SK-N-SH (cell line): ENCODE measurements at regions of chr5 and their contacts with region 1.

Region 1: DNA sequence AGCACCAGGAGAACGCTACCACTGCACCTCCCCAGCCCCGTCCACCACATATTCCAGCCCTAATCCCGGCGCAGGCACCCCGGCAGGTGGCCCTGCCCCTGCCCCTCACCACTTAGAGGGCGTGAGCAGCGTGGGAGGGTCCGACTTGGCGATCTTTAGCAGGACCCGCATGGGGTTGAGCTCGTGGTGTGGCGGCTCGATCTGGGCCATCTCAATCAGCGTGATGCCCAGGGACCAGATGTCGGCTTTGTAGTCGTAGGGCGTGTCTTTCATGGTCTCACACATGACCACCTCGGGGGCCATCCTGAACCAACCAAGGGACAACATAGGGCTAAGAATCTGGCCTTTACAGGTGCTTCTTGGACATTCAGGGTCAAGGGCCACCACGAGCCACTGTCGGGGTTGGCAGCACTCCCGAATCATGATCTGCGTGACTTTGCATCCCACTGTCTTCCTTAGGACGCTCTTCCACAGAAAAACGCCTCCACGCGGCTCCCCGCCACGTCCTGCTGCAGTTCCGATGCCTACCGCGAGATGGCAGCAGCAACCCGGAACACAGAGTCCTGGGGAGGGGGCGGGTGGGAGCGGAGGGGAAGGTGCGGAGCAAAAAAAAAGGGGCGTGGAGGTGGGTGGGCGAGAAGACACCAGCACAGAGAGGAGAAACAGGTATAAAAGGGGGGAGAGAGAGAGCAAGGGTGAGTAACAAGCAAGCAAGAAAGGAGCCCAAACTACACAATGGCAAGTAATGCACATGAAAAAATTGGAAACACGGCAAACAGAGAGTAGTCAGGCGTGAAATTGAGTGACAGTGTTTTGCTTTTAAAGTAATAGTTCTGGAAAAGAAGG is 81.3 kb downstream of the STK10 start:
- DNase-seq: peak; percentile 86
- H3K4me3 ChIP-seq: peak overlapping the region in 1 of 2 experiments; percentile 14; a peak in 3 of 4 replicates
- H3K27ac ChIP-seq: no peak overlapping the region
- H3K4me1 ChIP-seq: peaks cover 14 to 32% of the 10 kb centered on the region in 2 experiments
- H3K27me3 ChIP-seq: no peaks in the 10 kb centered on the region
- CTCF ChIP-seq: peak; percentile 85
- EP300 ChIP-seq: no peak
- RAD21 ChIP-seq: peak; percentile 85

Region 2: GRCh38 chr5:172283020-172283861 is 176.5 kb after region 1 on chr5 and contains the start of gene UBTD2:
- CTCF ChIA-PET with region 1: interaction called, 13 read pairs
- POLR2A ChIA-PET with region 1: interaction called, 5 read pairs
- DNase-seq: peak; percentile 94
- H3K4me3 ChIP-seq: peak within 1 kb of the TSS; percentile 77 to 94
- H3K27ac ChIP-seq: peak within 1 kb of the TSS; percentile 67 to 86
- H3K4me1 ChIP-seq: peaks cover 5 to 8% of the 10 kb centered on the region in 2 experiments; a peak in 3 of 4 replicates
- H3K27me3 ChIP-seq: no peaks in the 10 kb centered on the region
- CTCF ChIP-seq: peak; percentile 56
- EP300 ChIP-seq: no peak
- RAD21 ChIP-seq: peak; percentile 45
- polyA plus RNA-seq, gene UBTD2: 13.8 and 15.5 TPM in 2 replicates